Ascending aorta (tissue), 2 donors: ENCODE measurements at regions of chr11 and their contacts with region 1.

Region 1: GRCh38 chr11:11621573-11622319 is at the start of gene GALNT18:
- DNase-seq: peak; percentile 36 to 94
- H3K4me3 ChIP-seq: peak within 1 kb of the TSS; percentile 62 to 92
- H3K27ac ChIP-seq: peak within 1 kb of the TSS; percentile 63 to 90
- H3K4me1 ChIP-seq: peaks cover 0 to 29% of the 10 kb centered on the region in 2 donors
- H3K27me3 ChIP-seq: no peaks in the 10 kb centered on the region
- CTCF ChIP-seq: peak; percentile 15 to 56 (median 45)
- total RNA-seq, gene GALNT18: 53.5 TPM

Region 2: GRCh38 chr11:10857709-10858438 is 763.9 kb before region 1 on chr11 and contains the start of gene ZBED5:
- intact Hi-C with region 1: loop called (anchors 5 kb)
- DNase-seq: peak; percentile 95 to 98
- H3K4me3 ChIP-seq: peak within 1 kb of the TSS; percentile 88 to 92
- H3K27ac ChIP-seq: peak within 1 kb of the TSS; percentile 97 to 99
- H3K4me1 ChIP-seq: peaks cover 6 to 21% of the 10 kb centered on the region in 2 donors
- H3K27me3 ChIP-seq: no peaks in the 10 kb centered on the region
- CTCF ChIP-seq: peak in 2 of 3 experiments; percentile 18 to 38
- total RNA-seq, gene ZBED5: 7.8 TPM

Region 3: GRCh38 chr11:11142430-11142829 is 479.3 kb before region 1 on chr11:
- intact Hi-C with region 1: loop called (anchors 5 kb)
- DNase-seq: peak in 1 of 2 donors; percentile 72
- H3K4me3 ChIP-seq: no peak overlapping the region
- H3K27ac ChIP-seq: peak overlapping the region; percentile 83 to 88
- H3K4me1 ChIP-seq: peaks cover 13 to 32% of the 10 kb centered on the region in 2 donors
- H3K27me3 ChIP-seq: no peaks in the 10 kb centered on the region
- CTCF ChIP-seq: no peak

Region 4: GRCh38 chr11:11407065-11407762 is 214.5 kb before region 1 on chr11:
- intact Hi-C with region 1: loop called (anchors 2 kb)
- DNase-seq: peak in 1 of 2 donors; percentile 75
- H3K4me3 ChIP-seq: no peak overlapping the region
- H3K27ac ChIP-seq: peak overlapping the region; percentile 74 to 80
- H3K4me1 ChIP-seq: peaks cover 9 to 40% of the 10 kb centered on the region in 2 donors
- H3K27me3 ChIP-seq: no peaks in the 10 kb centered on the region
- CTCF ChIP-seq: peak in 1 of 3 experiments; percentile 44

Region 5: DNA sequence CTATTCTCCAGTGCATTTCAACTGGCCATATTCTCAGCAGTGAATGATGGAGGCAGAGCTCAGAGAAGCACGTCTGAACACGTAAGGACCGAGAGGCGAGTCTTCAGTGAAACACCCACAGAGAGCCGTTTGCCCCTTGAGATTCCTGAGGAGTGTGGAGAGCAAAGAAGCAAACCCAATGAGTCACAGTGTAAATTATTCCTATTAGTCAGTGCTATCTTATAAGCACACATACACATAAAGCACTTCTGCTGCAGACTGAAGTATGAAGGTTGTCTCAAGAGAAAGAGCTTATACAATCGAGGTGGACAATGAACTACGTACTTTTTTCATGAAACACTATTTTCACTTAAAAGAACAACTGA is 37.3 kb before region 1 on chr11:
- intact Hi-C with region 1: loop called (anchors 2 kb)
- DNase-seq: no peak
- H3K4me3 ChIP-seq: no peak overlapping the region
- H3K27ac ChIP-seq: peak overlapping the region; percentile 30 to 81
- H3K4me1 ChIP-seq: peaks cover 10 to 51% of the 10 kb centered on the region in 2 donors
- H3K27me3 ChIP-seq: no peaks in the 10 kb centered on the region
- CTCF ChIP-seq: no peak